OCI-LY7 (cell line): ENCODE measurements at regions of chr5 and their contacts with region 1.

Region 1: GRCh38 chr5:157575381-157576020 is at the start of gene ADAM19:
- DNase-seq: peak; percentile 75
- H3K4me3 ChIP-seq: peak within 1 kb of the TSS; percentile 81
- H3K27ac ChIP-seq: peak within 1 kb of the TSS; percentile 28
- H3K4me1 ChIP-seq: peaks cover 54% of the 10 kb centered on the region
- CTCF ChIP-seq: 0 out of 2 replicates have a peak, but pooled peaks have one; percentile 6
- total RNA-seq, gene ADAM19: 19.0 and 24.2 TPM in 2 replicates

Region 2: DNA sequence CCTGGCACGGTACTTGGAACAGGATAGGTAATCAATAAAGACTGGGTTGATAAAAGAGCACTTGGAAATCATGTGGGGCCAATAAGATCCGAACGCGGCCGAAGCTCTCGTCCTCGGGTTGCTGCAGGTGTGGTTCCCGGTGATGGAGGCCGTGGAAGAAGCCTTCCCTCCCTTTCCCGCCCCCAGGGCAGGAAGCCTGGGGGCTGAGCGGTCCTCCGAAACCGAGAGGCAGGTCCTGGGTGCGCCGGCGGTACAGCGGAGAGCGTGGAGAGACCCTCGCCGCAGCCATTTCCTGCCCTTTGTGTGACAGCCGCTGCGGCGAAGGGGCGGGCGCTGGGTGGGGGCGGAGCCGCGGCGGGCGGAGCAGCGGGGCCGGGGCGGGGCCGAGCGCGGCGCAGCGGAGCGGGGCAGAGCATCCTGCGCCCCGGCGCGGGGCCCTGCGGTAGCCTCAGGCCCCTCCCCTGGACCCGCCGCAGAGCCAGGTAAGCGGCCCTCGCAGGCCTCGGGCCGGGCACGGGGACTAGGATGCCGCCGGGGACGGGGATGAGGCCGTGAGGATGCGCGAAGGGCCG is 309.7 kb before region 1 on chr5 and contains the start of gene CYFIP2:
- CTCF ChIA-PET with region 1: no interaction called
- POLR2A ChIA-PET with region 1: no interaction called
- intact Hi-C with region 1: loop called (anchors 2 kb)
- DNase-seq: peak; percentile 91
- H3K4me3 ChIP-seq: peak within 1 kb of the TSS; percentile 82
- H3K27ac ChIP-seq: peak within 1 kb of the TSS; percentile 98
- H3K4me1 ChIP-seq: peaks cover 63% of the 10 kb centered on the region
- CTCF ChIP-seq: no peak
- total RNA-seq, gene CYFIP2: 221 and 258 TPM in 2 replicates

Region 3: DNA sequence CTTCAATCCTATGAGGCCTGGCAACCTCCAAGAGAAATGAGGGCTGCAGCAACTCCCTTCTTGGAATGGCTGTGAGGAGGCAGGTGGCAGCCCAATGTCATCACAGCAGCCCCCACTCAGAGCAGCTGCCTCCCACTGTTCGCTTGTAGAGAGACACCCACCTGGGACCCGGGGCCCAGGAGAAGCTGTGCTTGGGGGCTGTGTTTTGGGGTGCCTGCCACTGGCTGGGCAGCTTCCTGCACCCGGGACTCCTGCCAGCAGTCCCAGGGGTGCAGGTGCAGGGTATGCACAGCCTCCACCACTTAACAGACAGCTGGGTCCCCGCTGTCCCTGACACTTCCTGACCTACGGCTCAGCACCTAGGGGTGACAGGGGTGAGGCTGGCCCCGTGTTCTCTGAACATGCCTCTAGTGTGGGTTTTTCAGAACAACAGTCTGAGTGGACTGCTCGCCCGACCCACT is 89.2 kb before region 1 on chr5:
- CTCF ChIA-PET with region 1: no interaction called
- POLR2A ChIA-PET with region 1: interaction called, 10 read pairs
- intact Hi-C with region 1: loop called (anchors 2 kb)
- DNase-seq: peak; percentile 81
- H3K4me3 ChIP-seq: peak overlapping the region; percentile 22
- H3K27ac ChIP-seq: peak overlapping the region; percentile 96
- H3K4me1 ChIP-seq: peaks cover 57% of the 10 kb centered on the region
- CTCF ChIP-seq: no peak

Region 4: DNA sequence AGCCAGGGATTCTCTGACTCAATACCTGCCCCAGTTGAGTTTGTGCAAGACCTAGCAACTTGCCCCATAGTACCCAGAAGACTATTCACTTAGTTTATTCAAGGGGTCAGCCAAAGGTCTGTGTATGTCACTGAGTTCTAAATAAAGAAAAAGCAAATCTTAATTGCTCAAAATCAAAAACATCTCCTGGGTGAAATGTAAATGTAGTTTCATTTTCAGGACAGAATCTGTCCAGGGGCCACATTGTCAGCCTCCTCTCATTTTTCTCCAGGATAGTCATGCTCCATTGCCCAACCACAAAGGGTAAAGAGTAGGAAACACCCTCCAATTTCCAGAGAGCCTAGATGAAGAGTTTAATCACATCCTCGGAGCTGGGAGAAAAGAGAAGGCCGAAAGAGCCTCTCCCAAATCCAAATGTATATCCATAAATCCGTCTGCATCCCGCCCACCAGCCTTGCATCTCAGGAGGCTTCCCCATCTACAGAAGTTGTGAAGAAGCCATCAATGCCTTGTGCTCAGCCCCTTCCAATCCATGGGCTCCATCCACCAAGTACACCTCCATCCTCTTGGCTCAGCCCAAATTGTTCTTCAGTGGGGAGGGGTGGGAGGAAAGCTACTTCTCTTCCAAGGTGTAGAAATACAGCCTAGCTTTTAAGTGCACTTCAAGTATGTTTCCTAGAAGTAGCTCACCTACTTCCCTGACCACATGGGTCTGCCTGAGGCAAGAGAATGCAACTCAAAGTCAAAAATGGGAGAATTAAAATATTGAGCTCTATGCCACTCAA is 26.8 kb before region 1 on chr5:
- CTCF ChIA-PET with region 1: no interaction called
- POLR2A ChIA-PET with region 1: interaction called, 28 read pairs
- intact Hi-C with region 1: no loop called
- DNase-seq: no peak
- H3K4me3 ChIP-seq: no peak overlapping the region
- H3K27ac ChIP-seq: no peak overlapping the region
- H3K4me1 ChIP-seq: peaks cover 24% of the 10 kb centered on the region
- CTCF ChIP-seq: no peak

Region 5: DNA sequence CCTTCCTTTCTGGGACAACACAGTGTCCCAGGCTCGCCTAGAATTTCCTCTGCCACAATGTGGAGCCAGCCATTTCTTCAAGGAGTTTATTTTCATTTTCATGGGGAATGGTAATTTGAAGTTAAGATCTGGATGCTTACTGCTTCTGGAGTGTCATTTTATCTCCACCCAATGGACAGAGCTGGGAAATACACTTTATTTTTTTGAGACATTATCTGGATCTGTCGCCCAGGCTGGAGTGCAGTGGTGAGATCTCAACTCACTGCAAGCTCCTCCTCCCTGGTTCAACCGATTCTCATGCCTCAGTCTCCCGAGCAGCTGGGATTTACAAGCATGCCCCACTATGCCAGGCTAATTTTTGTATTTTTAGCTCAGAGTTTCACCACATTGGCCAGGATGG is 143.0 kb after region 1 on chr5:
- CTCF ChIA-PET with region 1: no interaction called
- POLR2A ChIA-PET with region 1: interaction called, 3 read pairs
- intact Hi-C with region 1: loop called (anchors 2 kb)
- DNase-seq: peak; percentile 70
- H3K4me3 ChIP-seq: no peak overlapping the region
- H3K27ac ChIP-seq: no peak overlapping the region
- H3K4me1 ChIP-seq: peaks cover 19% of the 10 kb centered on the region
- CTCF ChIP-seq: peak; percentile 82

Region 6: GRCh38 chr5:157994906-157995519 is 419.5 kb after region 1 on chr5:
- CTCF ChIA-PET with region 1: no interaction called
- POLR2A ChIA-PET with region 1: no interaction called
- intact Hi-C with region 1: no loop called
- DNase-seq: peak; percentile 74
- H3K4me3 ChIP-seq: no peak overlapping the region
- H3K27ac ChIP-seq: no peak overlapping the region
- H3K4me1 ChIP-seq: no peaks in the 10 kb centered on the region
- CTCF ChIP-seq: peak; percentile 90